Activated CD8-positive, alpha-beta T cell treated with anti-CD3 and anti-CD28 coated beads for 36 hours (primary cell): ENCODE measurements at regions of chr11 and their contacts with region 1.

Region 1: GRCh38 chr11:73766763-73767162 is 5.9 kb upstream of the RAB6A start:
- DNase-seq: no peak
- ATAC-seq: no peak
- H3K4me3 Mint-ChIP-seq: no peak overlapping the region
- H3K27ac Mint-ChIP-seq: no peak overlapping the region
- H3K4me1 Mint-ChIP-seq: no peaks in the 10 kb centered on the region
- H3K27me3 Mint-ChIP-seq: peaks cover 11% of the 10 kb centered on the region
- CTCF ChIP-seq: no peak

Region 2: DNA sequence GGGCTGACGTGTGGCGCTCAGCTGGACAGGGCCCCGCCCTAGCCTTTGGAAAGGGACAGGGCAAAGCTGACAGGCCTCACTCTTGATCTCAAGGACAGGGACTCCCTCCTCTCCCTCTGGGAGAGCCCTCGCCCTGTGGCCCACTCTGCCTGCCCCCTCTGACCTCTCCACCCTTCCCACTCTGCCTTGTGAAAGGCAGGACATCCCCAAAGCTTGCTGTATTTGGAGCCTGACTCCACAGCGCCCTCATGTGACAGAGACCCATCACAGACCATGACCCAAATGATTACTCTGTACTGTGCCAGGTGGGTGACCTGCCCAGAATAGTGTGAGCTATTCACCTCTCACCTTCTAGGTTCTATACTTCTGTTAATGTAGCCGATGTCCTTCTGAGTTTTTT is 529.9 kb before region 1 on chr11:
- CTCF ChIA-PET with region 1: no interaction called
- POLR2A ChIA-PET with region 1: no interaction called
- intact Hi-C with region 1: no loop called
- DNase-seq: peak; percentile 67
- ATAC-seq: peak; percentile 89
- H3K4me3 Mint-ChIP-seq: no peak overlapping the region
- H3K27ac Mint-ChIP-seq: no peak overlapping the region
- H3K4me1 Mint-ChIP-seq: no peaks in the 10 kb centered on the region
- H3K27me3 Mint-ChIP-seq: peaks cover 2% of the 10 kb centered on the region
- CTCF ChIP-seq: peak; percentile 69

Region 3: DNA sequence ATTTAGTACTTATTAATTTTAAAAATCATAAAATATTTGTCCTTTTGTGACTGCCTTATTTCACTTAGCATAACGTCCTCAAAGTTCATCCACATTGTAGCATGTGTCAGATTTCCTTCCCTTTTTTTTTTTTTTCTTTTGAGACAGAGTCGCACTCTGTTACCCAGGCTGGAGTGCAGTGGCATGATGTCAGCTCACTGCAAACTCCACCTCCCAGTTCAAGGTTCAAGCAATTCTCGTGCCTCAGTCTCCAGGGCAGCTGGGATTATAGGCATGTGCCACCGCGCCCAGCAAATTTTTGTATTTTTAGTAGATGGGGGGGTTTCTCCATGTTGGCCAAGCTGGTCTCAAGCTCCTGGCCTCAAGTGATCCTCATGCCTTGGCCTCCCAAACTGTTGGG is 16.5 kb before region 1 on chr11:
- CTCF ChIA-PET with region 1: no interaction called
- POLR2A ChIA-PET with region 1: no interaction called
- intact Hi-C with region 1: no loop called
- DNase-seq: no peak
- ATAC-seq: no peak
- H3K4me3 Mint-ChIP-seq: no peak overlapping the region
- H3K27ac Mint-ChIP-seq: no peak overlapping the region
- H3K4me1 Mint-ChIP-seq: peaks cover 48% of the 10 kb centered on the region
- H3K27me3 Mint-ChIP-seq: no peaks in the 10 kb centered on the region
- CTCF ChIP-seq: no peak

Region 4: GRCh38 chr11:73779084-73779902 is 12.5 kb after region 1 on chr11:
- CTCF ChIA-PET with region 1: interaction called, 8 read pairs
- POLR2A ChIA-PET with region 1: interaction called, 26 read pairs
- intact Hi-C with region 1: loop called (anchors 1 kb)
- DNase-seq: peak; percentile 99
- ATAC-seq: peak; percentile 98
- H3K4me3 Mint-ChIP-seq: peak overlapping the region; percentile 90
- H3K27ac Mint-ChIP-seq: peak overlapping the region; percentile 99
- H3K4me1 Mint-ChIP-seq: peaks cover 10% of the 10 kb centered on the region
- H3K27me3 Mint-ChIP-seq: no peaks in the 10 kb centered on the region
- CTCF ChIP-seq: no peak

Region 5: GRCh38 chr11:73795925-73796632 is 29.3 kb after region 1 on chr11:
- CTCF ChIA-PET with region 1: no interaction called
- POLR2A ChIA-PET with region 1: no interaction called
- intact Hi-C with region 1: no loop called
- DNase-seq: no peak
- ATAC-seq: no peak
- H3K4me3 Mint-ChIP-seq: no peak overlapping the region
- H3K27ac Mint-ChIP-seq: no peak overlapping the region
- H3K4me1 Mint-ChIP-seq: peaks cover 8% of the 10 kb centered on the region
- H3K27me3 Mint-ChIP-seq: no peaks in the 10 kb centered on the region
- CTCF ChIP-seq: no peak

Region 6: GRCh38 chr11:73818846-73819245 is 52.1 kb after region 1 on chr11:
- CTCF ChIA-PET with region 1: no interaction called
- POLR2A ChIA-PET with region 1: no interaction called
- intact Hi-C with region 1: no loop called
- DNase-seq: no peak
- ATAC-seq: no peak
- H3K4me3 Mint-ChIP-seq: no peak overlapping the region
- H3K27ac Mint-ChIP-seq: no peak overlapping the region
- H3K4me1 Mint-ChIP-seq: no peaks in the 10 kb centered on the region
- H3K27me3 Mint-ChIP-seq: no peaks in the 10 kb centered on the region
- CTCF ChIP-seq: no peak